ENCODE measurements at regions of chr18 and their contacts with region 1.

Region 1: DNA sequence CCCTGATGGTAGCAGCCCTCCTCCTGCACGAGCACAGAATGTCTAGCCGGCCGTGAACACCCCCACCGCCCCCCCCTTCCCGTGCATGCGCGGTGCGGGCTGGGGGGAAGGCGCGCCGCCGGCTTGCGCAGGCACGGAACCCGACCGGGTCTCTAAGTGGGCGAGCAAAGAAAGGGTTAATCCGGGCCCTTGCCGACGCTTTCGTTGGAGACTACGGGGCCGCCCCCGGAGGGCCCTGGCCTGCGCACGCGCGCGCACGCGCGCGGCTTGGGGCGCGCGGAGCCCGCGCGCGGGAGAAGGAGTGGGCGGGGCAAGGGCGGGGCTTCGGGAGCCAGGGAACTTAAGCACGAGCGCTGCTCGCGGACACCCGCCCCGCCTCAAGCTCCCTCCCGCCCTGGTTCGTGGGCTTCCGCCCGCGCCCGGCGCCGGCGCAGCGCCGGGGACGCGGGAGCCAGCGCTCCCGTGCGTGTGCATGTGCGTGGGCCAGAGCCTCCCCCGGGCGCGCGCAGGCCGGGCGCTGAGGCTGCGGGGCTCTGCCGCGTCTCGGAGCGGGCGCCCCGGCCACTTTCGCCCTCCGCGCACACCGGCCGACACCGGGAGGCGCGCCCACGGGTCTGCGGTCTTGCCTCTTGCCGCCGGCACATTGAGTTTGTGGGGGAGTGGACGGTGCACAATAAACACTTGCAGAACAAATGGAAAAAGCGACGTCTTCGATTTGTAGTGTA is 617 bp upstream of the ZBTB14 start:
- DNase-seq: peak; percentile 96 to 99 (median 97)
- H3K4me3 ChIP-seq: peak overlapping the region; percentile 80
- H3K27ac ChIP-seq: peak overlapping the region; percentile 56 to 88
- H3K4me1 ChIP-seq: no peaks in the 10 kb centered on the region
- H3K27me3 ChIP-seq: no peaks in the 10 kb centered on the region
- CTCF ChIP-seq: no peak
- EP300 ChIP-seq: no peak
- POLR2A ChIP-seq: no peak

Region 2: DNA sequence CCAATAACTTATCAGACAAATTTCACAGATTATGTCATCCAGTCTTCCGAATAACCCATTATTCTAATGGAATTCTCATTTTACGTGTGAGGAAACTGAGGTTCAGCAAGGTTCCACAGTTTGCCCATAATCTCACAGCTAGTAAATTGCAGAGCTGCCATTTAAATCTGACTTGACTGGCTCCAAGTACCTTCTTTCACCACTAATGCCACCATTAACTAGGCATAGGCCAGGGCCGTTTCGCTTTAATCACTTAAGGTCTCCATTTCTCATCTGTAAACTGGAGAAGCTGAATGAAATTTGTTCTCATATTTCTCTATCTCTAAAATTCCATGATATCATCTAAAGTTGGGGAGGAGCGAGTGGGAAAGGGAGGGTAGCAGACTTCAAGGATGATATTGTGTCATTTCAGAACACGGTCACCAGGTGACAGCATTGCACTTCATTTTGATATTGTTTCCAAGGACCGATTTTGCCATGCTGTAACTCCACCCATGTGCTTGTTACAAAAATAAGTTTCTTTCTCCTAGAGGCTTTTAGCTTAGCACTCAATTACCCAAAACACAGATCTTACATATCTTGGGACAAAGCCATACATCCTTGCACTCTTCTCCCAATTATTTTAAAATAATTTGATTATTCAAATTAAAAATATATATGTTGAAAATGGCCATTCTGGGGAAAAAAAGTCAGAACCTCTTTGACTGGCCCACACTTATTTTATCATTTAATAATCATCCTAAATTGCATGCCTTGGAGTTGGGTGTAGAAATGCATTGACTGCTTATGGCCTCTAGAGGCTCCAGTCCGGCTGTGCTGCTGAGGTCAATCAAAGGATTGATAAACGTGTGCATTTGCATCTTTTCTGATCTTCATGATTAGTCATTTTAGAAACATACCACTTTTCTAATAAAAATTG is 222.9 kb before region 1 on chr18:
- intact Hi-C with region 1: no loop called
- DNase-seq: no peak
- H3K4me3 ChIP-seq: no peak overlapping the region
- H3K27ac ChIP-seq: no peak overlapping the region
- H3K4me1 ChIP-seq: no peaks in the 10 kb centered on the region
- H3K27me3 ChIP-seq: no peaks in the 10 kb centered on the region
- CTCF ChIP-seq: no peak
- EP300 ChIP-seq: no peak
- POLR2A ChIP-seq: no peak

Region 3: GRCh38 chr18:5237723-5238370 is 58.3 kb before region 1 on chr18:
- intact Hi-C with region 1: loop called (anchors 5 to 10 kb)
- DNase-seq: peak; percentile 84 to 92 (median 87)
- H3K4me3 ChIP-seq: peak overlapping the region; percentile 60
- H3K27ac ChIP-seq: peak overlapping the region; percentile 98
- H3K4me1 ChIP-seq: no peaks in the 10 kb centered on the region
- H3K27me3 ChIP-seq: no peaks in the 10 kb centered on the region
- CTCF ChIP-seq: peak in 2 of 3 donors; percentile 49 to 73
- EP300 ChIP-seq: no peak
- POLR2A ChIP-seq: peak; percentile 74

Measured in ovary (tissue), 10 donors.